ENCODE measurements at regions of chr1 and their contacts with region 1.

Region 1: GRCh38 chr1:51192213-51192843 is 43.7 kb upstream of the RNF11 start:
- DNase-seq: peak; percentile 80
- H3K4me3 ChIP-seq: no peak overlapping the region
- H3K27ac ChIP-seq: no peak overlapping the region
- H3K4me1 ChIP-seq: no peaks in the 10 kb centered on the region
- H3K27me3 ChIP-seq: no peaks in the 10 kb centered on the region
- CTCF ChIP-seq: peak; percentile 83

Region 2: DNA sequence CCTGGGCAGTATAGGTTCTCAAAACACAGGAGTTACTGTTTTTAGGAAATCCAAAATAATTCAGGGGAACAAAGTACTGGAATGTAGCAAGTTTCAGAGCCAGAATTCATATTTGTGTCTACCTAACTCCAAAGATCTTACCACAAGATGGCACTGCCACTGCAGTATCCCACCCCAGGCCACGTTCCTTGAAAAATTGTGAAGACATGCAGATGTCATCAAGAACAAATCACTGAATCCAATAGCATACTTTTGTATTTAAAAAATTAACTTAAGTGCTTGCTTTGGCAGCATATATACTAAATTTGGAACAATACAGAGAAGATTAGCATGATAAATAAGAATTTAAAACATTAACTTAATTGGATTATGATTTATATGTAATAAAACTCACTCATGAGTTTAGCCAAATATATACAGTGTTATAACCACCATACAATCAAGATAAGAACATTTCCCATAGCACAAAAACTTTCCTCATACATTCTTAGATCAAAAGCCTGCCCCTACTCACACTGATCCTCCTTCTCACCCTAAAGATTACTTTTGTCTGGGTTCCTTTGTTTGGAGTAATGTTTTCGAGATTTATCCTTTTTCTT is 442.2 kb before region 1 on chr1:
- CTCF ChIA-PET with region 1: no interaction called
- POLR2A ChIA-PET with region 1: no interaction called
- intact Hi-C with region 1: loop called (anchors 2 kb)
- DNase-seq: peak; percentile 76
- H3K4me3 ChIP-seq: no peak overlapping the region
- H3K27ac ChIP-seq: no peak overlapping the region
- H3K4me1 ChIP-seq: peaks cover 11% of the 10 kb centered on the region
- H3K27me3 ChIP-seq: no peaks in the 10 kb centered on the region
- CTCF ChIP-seq: peak; percentile 78

Region 3: DNA sequence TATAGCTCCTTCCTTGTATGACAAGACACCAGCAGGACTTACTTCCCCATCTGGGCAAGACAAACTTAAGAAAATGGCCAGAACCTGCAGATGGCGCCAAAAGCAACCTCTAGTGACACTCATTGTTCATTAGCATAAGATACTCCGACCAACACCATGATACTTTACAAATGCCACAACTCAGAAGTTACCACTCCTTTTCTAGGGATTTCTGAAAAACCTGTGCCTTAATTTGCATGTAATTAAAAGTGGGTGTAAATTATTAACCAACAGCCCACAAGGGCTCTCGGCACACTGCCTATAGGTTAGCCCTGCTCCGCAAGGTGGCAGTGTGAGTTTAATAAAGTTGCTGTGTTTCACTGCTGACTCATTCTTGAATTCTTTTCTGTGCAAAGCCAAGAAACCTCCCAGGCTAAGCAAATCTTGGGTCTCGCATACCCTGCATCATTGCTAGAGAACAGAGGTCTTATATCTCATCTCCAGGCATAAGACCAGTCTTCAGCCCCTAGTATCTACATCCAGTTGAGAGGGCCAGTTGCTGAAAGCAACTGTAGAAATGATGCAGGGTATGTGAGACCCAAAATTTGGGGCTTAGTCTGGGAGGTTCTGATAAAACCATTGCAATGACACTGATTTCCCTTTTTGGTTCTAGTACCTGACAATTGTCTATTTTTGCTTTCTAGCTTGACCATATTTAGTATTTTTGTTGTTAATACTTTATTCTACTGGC is 318.7 kb before region 1 on chr1:
- CTCF ChIA-PET with region 1: interaction called, 3 read pairs
- POLR2A ChIA-PET with region 1: no interaction called
- intact Hi-C with region 1: loop called (anchors 2 kb)
- DNase-seq: peak; percentile 93
- H3K4me3 ChIP-seq: peak overlapping the region; percentile 32
- H3K27ac ChIP-seq: peak overlapping the region; percentile 48
- H3K4me1 ChIP-seq: peaks cover 10% of the 10 kb centered on the region
- H3K27me3 ChIP-seq: no peaks in the 10 kb centered on the region
- CTCF ChIP-seq: peak; percentile 99

Region 4: GRCh38 chr1:51088488-51088887 is 103.8 kb before region 1 on chr1:
- CTCF ChIA-PET with region 1: no interaction called
- POLR2A ChIA-PET with region 1: no interaction called
- intact Hi-C with region 1: loop called (anchors 5 kb)
- DNase-seq: no peak
- H3K4me3 ChIP-seq: no peak overlapping the region
- H3K27ac ChIP-seq: no peak overlapping the region
- H3K4me1 ChIP-seq: no peaks in the 10 kb centered on the region
- H3K27me3 ChIP-seq: peaks cover 19% of the 10 kb centered on the region
- CTCF ChIP-seq: peak; percentile 33; the same call in 1 of the 2 replicates